Activated naive CD4-positive, alpha-beta T cell treated with anti-CD3 and anti-CD28 coated beads for 36 hours (primary cell): ENCODE measurements at regions of chr7 and their contacts with region 1.

Region 1: DNA sequence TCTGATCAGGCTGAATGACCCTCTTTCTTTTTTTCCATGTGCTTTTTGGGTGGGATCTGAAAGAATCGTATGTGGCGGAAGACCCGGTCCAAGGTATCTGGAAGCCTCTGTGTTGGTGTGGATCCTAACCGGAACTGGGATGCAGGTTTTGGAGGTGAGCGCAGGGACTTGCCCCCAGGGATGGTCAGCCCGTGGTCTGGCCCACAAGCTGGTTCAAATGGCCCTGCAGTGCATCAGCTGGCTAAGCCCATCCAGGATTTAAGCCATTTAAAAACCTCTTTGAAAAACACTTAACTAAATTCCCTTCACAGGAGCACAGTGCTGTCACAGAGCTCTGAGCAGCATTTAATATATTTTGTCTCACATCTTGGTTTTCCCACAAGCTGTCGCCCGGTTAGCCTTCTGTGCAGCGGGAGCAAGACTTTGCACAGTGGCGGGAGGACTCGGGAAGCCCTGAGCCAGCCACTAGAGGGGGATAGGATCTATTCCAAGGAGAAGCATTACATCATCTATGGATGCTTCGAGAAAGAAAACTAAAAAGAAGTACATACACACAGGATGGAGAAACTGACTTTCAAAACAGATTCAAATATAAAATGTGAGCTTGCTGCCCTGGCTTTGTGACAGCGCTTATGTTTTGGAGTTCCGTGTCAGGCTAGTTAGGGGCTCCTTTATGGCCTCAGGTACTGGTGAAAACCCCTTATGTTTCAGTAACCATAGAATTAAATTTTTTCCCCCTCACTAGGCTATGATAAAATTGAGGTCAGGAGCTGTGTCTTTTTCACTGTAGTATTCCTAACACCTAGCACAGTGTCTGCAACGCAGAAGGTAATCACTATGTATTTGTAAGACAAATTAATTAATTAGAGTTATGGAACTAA is 11.3 kb downstream of the CPA2 start:
- DNase-seq: no peak
- H3K4me3 Mint-ChIP-seq: no peak overlapping the region
- H3K27ac Mint-ChIP-seq: peak overlapping the region; percentile 85
- H3K4me1 Mint-ChIP-seq: peaks cover 44% of the 10 kb centered on the region
- H3K27me3 Mint-ChIP-seq: no peaks in the 10 kb centered on the region

Region 2: DNA sequence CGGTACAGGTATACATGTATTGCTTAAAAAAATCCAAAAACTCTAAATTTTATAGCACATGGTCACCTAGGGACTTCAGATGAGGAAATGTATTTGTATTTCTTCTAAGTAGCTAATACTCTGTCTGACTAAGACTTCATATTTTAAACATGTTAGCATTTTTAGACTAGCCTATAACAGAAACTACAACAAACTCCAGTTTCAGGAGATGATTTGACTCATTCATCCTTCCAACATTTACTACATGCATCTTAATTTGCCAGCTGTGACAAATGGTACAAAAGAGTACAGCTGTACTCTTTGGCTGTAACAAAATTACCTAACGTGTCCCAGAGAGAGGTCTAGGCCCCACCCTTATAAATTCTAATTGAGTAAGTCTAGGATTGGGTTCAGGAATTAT is 95.0 kb before region 1 on chr7:
- CTCF ChIA-PET with region 1: no interaction called
- intact Hi-C with region 1: loop called (anchors 1 kb)
- DNase-seq: no peak
- H3K4me3 Mint-ChIP-seq: no peak overlapping the region
- H3K27ac Mint-ChIP-seq: peak overlapping the region; percentile 65
- H3K4me1 Mint-ChIP-seq: peaks cover 30% of the 10 kb centered on the region
- H3K27me3 Mint-ChIP-seq: no peaks in the 10 kb centered on the region

Region 3: DNA sequence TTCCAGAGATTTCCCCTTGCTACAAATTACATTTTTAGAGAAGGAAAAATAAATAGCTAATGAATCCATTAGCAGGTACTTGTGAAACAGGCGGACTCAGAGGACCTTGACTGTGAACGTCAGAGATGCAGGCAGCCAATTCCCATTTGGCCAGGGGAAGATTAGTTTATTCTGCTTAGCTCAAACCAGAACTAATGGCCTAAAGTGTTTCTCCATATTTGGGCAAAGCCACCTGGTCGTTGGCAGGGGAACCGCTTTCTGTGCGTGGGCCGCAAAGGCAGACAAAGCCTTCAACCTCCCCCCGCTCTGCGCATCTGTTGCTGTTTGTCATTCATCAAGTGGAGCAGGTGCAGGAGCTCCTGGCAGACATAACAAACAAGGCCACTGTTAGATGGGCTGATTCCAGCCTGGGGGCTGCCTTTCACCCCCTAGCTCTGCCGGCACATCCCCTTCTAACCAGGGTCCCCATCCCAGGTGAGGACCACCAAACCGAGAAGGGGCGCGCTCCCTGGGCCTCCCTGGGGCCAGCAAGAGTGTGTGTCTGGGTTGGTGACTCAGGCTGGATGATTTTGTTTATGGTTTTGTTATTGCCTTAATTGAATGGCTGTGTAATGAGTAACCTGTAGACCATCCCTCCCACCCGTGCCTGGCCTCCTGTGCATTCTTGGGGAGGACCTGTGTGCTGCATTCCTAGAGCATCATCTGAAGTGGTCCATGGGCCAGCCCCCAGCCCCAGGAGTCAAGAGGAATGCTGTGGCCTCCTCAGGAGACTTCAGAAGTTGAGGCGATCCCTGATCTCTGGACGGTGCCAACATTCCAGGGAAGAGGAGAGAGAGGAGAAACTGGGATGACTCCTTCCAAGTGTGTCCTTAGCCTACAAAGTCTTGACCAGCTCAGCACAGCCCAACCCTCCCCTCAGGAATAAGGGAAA is 87.8 kb after region 1 on chr7:
- CTCF ChIA-PET with region 1: no interaction called
- intact Hi-C with region 1: loop called (anchors 2 kb)
- DNase-seq: no peak
- H3K4me3 Mint-ChIP-seq: no peak overlapping the region
- H3K27ac Mint-ChIP-seq: no peak overlapping the region
- H3K4me1 Mint-ChIP-seq: peaks cover 30% of the 10 kb centered on the region
- H3K27me3 Mint-ChIP-seq: no peaks in the 10 kb centered on the region

Region 4: GRCh38 chr7:130393101-130393561 is 115.1 kb after region 1 on chr7:
- CTCF ChIA-PET with region 1: no interaction called
- intact Hi-C with region 1: no loop called
- DNase-seq: no peak
- H3K4me3 Mint-ChIP-seq: no peak overlapping the region
- H3K27ac Mint-ChIP-seq: no peak overlapping the region
- H3K4me1 Mint-ChIP-seq: peaks cover 20% of the 10 kb centered on the region
- H3K27me3 Mint-ChIP-seq: no peaks in the 10 kb centered on the region

Region 5: DNA sequence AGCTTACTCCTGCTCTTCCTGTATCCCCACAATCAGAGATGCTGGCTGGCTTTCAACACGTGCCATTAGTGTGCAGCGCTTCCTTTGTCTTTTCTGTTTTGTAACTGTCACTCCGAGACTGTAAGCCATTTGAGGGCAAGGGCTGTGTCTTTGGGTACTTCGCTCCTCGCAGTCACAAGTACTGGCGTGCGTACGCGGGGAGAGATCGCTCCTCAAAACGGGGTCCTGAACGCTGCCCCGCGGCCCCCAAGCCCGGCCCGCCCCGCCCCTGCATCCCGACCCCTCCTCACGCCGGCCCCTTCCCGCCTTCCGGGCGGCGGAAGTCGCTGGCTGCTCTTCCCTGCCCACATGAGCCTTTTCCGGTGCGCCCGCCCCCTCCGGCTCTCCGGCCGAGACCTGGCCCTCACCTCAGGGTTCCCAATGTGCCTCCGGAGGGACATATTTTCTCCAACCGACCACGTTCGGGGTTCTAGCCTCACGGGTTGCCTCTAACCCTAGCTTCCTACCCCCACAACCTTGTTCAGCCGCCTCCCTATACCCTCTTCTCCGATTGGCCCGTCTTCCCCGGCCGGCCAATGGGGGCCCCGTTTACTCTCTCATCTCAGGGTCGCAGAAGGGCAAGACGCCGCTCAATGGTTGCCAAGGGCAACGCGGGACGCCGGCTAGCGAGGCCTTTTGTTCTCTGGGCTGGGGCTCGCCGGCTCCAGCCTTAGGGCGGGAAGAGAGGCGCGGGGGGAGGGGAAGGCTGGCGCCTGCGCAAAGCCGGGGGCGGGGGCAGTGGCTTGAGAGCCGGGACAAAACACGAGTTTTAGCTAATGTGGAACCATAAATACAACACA is 162.7 kb after region 1 on chr7 and contains the start of gene CEP41:
- CTCF ChIA-PET with region 1: no interaction called
- intact Hi-C with region 1: loop called (anchors 2 kb)
- DNase-seq: peak; percentile 98
- H3K4me3 Mint-ChIP-seq: peak within 1 kb of the TSS; percentile 98
- H3K27ac Mint-ChIP-seq: peak within 1 kb of the TSS; percentile 98
- H3K4me1 Mint-ChIP-seq: peaks cover 50% of the 10 kb centered on the region
- H3K27me3 Mint-ChIP-seq: no peaks in the 10 kb centered on the region
- total RNA-seq, gene CEP41: 16.0 to 18.2 TPM

Region 6: GRCh38 chr7:130641497-130641896 is 363.5 kb after region 1 on chr7:
- CTCF ChIA-PET with region 1: no interaction called
- intact Hi-C with region 1: loop called (anchors 1 kb)
- DNase-seq: no peak
- H3K4me3 Mint-ChIP-seq: no peak overlapping the region
- H3K27ac Mint-ChIP-seq: peak overlapping the region; percentile 65
- H3K4me1 Mint-ChIP-seq: peaks cover 18% of the 10 kb centered on the region
- H3K27me3 Mint-ChIP-seq: no peaks in the 10 kb centered on the region

Region 7: DNA sequence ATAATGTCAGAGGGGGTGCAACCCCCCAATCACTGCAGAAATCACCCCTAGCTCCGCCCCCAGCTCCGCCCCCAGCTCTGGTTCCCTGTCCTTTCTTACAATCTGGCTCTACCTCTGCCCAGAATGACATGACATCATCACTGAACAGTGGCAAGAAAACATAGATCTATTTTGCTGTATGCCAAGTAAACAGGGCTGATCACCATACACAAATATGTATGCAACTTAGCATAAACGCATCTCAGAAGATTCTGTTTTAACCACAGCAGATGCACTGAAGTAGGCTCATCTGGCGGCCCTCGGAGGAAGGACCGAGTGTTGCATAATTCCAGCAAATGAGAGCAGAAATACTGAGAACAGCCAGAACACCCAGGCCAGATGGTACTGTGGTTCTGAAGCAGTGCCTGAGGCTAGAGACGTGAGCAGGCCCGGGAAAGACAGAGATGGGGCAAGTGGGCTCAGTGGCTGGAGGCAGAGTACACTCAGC is 749.3 kb after region 1 on chr7:
- CTCF ChIA-PET with region 1: no interaction called
- intact Hi-C with region 1: loop called (anchors 10 kb)
- DNase-seq: peak; percentile 52
- H3K4me3 Mint-ChIP-seq: no peak overlapping the region
- H3K27ac Mint-ChIP-seq: peak overlapping the region; percentile 74
- H3K4me1 Mint-ChIP-seq: peaks cover 86% of the 10 kb centered on the region
- H3K27me3 Mint-ChIP-seq: no peaks in the 10 kb centered on the region